Activated CD8-positive, alpha-beta T cell treated with anti-CD3 and anti-CD28 coated beads for 36 hours (primary cell): ENCODE measurements at regions of chr17 and their contacts with region 1.

Region 1: GRCh38 chr17:74493381-74493833 is 27.0 kb downstream of the CD300A start:
- DNase-seq: peak; percentile 76
- ATAC-seq: peak; percentile 96
- H3K4me3 Mint-ChIP-seq: no peak overlapping the region
- H3K27ac Mint-ChIP-seq: no peak overlapping the region
- H3K4me1 Mint-ChIP-seq: peaks cover 3% of the 10 kb centered on the region
- H3K27me3 Mint-ChIP-seq: no peaks in the 10 kb centered on the region
- CTCF ChIP-seq: peak; percentile 96

Region 2: GRCh38 chr17:74442670-74443515 is 50.5 kb before region 1 on chr17:
- CTCF ChIA-PET with region 1: interaction called, 10 read pairs
- POLR2A ChIA-PET with region 1: no interaction called
- intact Hi-C with region 1: no loop called
- DNase-seq: peak; percentile 53
- ATAC-seq: peak; percentile 71
- H3K4me3 Mint-ChIP-seq: no peak overlapping the region
- H3K27ac Mint-ChIP-seq: no peak overlapping the region
- H3K4me1 Mint-ChIP-seq: peaks cover 7% of the 10 kb centered on the region
- H3K27me3 Mint-ChIP-seq: peaks cover 1% of the 10 kb centered on the region
- CTCF ChIP-seq: no peak

Region 3: GRCh38 chr17:74508156-74508555 is 14.7 kb after region 1 on chr17:
- CTCF ChIA-PET with region 1: no interaction called
- POLR2A ChIA-PET with region 1: no interaction called
- intact Hi-C with region 1: no loop called
- DNase-seq: no peak
- ATAC-seq: no peak
- H3K4me3 Mint-ChIP-seq: no peak overlapping the region
- H3K27ac Mint-ChIP-seq: no peak overlapping the region
- H3K4me1 Mint-ChIP-seq: peaks cover 17% of the 10 kb centered on the region
- H3K27me3 Mint-ChIP-seq: peaks cover 3% of the 10 kb centered on the region
- CTCF ChIP-seq: no peak

Region 4: DNA sequence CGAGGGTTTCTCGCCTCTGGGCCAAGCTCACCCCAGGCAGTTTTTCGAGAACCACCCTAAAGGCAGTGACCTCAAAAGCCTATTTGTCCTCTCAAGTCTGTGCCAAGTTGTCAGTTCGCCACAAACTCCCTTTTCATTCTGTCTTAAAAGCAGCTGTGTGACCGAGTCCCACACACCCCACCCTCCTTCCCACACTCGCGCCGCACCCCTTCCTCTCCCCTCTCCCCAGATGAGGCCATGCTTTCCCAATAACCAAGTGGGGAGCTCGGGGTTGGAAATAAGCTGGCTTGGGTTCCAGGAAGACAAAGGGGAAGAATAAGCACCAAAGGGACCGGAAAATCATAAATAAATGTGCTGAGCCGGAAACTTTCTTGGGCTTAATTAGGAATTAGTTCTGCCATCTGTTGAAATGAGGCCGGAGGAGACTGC is 329.5 kb after region 1 on chr17:
- CTCF ChIA-PET with region 1: no interaction called
- POLR2A ChIA-PET with region 1: no interaction called
- intact Hi-C with region 1: no loop called
- DNase-seq: no peak
- ATAC-seq: no peak
- H3K4me3 Mint-ChIP-seq: no peak overlapping the region
- H3K27ac Mint-ChIP-seq: no peak overlapping the region
- H3K4me1 Mint-ChIP-seq: no peaks in the 10 kb centered on the region
- H3K27me3 Mint-ChIP-seq: no peaks in the 10 kb centered on the region
- CTCF ChIP-seq: no peak